Psoas muscle (tissue), 8 donors: ENCODE measurements at regions of chrX and their contacts with region 1.

Region 1: GRCh38 chrX:87327267-87327666 is 190.3 kb upstream of the KLHL4 start:
- DNase-seq: no peak
- ATAC-seq: no peak
- H3K4me3 ChIP-seq: no peak overlapping the region
- H3K27ac ChIP-seq: no peak overlapping the region
- H3K4me1 ChIP-seq: no peaks in the 10 kb centered on the region
- H3K27me3 ChIP-seq: peaks cover 0 to 2% (median 0%) of the 10 kb centered on the region in 3 donors
- CTCF ChIP-seq: no peak

Region 2: DNA sequence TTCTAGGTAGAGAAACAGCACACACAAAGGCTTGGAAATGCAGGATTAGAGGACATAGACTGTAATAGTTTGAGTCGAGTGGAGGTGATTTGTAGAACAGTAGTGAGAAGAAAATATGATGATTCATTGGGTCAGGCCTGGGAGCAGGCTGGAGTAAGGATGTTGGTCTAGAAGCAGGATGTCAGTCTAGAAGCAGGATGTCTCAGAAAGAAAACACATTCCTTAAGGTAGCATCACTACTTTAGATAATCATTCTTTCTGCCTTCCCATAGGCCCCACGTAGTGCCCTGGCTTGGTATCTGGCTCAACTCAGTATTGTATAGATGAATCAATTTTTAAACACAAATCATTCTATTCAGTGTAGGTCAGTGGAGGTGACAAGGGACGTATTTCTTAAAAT is 1190.2 kb before region 1 on chrX:
- intact Hi-C with region 1: no loop called
- DNase-seq: no peak
- ATAC-seq: no peak
- H3K4me3 ChIP-seq: no peak overlapping the region
- H3K27ac ChIP-seq: no peak overlapping the region
- H3K4me1 ChIP-seq: no peaks in the 10 kb centered on the region
- H3K27me3 ChIP-seq: peaks cover 0 to 6% (median 0%) of the 10 kb centered on the region in 3 donors
- CTCF ChIP-seq: no peak

Region 3: GRCh38 chrX:87265518-87265917 is 61.7 kb before region 1 on chrX:
- intact Hi-C with region 1: no loop called
- DNase-seq: no peak
- ATAC-seq: no peak
- H3K4me3 ChIP-seq: no peak overlapping the region
- H3K27ac ChIP-seq: no peak overlapping the region
- H3K4me1 ChIP-seq: no peaks in the 10 kb centered on the region
- H3K27me3 ChIP-seq: no peaks in the 10 kb centered on the region
- CTCF ChIP-seq: no peak

Region 4: GRCh38 chrX:87388381-87388780 is 61.1 kb after region 1 on chrX:
- intact Hi-C with region 1: loop called in 1 of 2 experiments (anchors 10 kb)
- DNase-seq: no peak
- ATAC-seq: no peak
- H3K4me3 ChIP-seq: no peak overlapping the region
- H3K27ac ChIP-seq: no peak overlapping the region
- H3K4me1 ChIP-seq: no peaks in the 10 kb centered on the region
- H3K27me3 ChIP-seq: no peaks in the 10 kb centered on the region
- CTCF ChIP-seq: no peak

Region 5: DNA sequence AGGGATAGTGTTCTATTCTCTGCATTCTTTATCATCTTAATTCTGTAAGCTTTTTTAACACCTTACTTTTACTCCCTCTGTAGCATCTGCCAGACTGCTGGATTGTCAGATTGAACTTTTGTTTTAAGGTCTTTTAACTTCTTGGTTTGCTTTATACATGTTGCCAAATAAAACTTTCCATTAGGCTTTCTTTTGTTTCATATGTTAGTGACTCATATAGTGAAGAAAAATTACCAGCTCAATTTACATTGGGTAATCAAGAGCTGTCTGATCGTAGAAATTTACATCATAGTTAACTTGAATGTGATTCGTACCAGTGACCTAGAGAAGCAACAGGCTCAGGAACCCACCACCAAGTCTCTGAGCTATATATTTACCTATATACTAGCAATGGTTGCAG is 161.8 kb after region 1 on chrX:
- intact Hi-C with region 1: no loop called
- DNase-seq: no peak
- ATAC-seq: no peak
- H3K4me3 ChIP-seq: no peak overlapping the region
- H3K27ac ChIP-seq: no peak overlapping the region
- H3K4me1 ChIP-seq: no peaks in the 10 kb centered on the region
- H3K27me3 ChIP-seq: peaks cover 0 to 3% (median 0%) of the 10 kb centered on the region in 3 donors
- CTCF ChIP-seq: no peak